ENCODE measurements at regions of chr1 and their contacts with region 1.

Region 1: DNA sequence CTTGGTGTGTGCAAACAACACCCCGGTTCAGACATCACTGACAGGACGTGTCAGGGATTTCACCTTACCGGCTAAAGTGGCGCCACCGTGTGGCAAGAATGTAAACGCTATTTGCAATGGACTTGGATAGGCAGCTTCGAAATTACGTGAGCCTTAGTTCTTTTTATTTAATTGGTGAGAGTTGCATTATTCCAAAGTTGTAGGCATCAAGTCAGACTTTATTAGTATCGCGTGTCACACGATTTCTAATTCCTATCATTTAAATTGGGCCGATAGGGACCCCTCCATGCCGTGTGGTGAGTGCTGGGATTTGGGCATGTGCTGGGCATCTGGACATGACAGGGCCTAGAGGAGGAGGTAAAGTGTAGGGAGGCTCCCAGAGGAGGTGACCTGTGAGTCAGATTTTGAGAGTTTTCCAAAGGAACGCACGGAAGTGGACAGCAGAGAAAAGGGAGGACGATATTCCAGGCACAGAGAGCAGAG is 14.5 kb upstream of the CPT2 start:
- DNase-seq: peak; percentile 76
- H3K4me3 ChIP-seq: no peak overlapping the region
- H3K27ac ChIP-seq: no peak overlapping the region
- H3K4me1 ChIP-seq: no peaks in the 10 kb centered on the region
- H3K27me3 ChIP-seq: peaks cover 0 to 3% of the 10 kb centered on the region in 2 experiments
- CTCF ChIP-seq: peak; percentile 75 to 89
- POLR2A ChIP-seq: no peak

Region 2: GRCh38 chr1:52080014-52080415 is 1102.1 kb before region 1 on chr1:
- CTCF ChIA-PET with region 1: no interaction called
- POLR2A ChIA-PET with region 1: no interaction called
- dilution Hi-C with region 1: no loop called
- intact Hi-C with region 1: no loop called
- DNase-seq: no peak
- H3K4me3 ChIP-seq: no peak overlapping the region
- H3K27ac ChIP-seq: no peak overlapping the region
- H3K4me1 ChIP-seq: no peaks in the 10 kb centered on the region
- H3K27me3 ChIP-seq: no peaks in the 10 kb centered on the region
- CTCF ChIP-seq: no peak
- POLR2A ChIP-seq: no peak

Region 3: DNA sequence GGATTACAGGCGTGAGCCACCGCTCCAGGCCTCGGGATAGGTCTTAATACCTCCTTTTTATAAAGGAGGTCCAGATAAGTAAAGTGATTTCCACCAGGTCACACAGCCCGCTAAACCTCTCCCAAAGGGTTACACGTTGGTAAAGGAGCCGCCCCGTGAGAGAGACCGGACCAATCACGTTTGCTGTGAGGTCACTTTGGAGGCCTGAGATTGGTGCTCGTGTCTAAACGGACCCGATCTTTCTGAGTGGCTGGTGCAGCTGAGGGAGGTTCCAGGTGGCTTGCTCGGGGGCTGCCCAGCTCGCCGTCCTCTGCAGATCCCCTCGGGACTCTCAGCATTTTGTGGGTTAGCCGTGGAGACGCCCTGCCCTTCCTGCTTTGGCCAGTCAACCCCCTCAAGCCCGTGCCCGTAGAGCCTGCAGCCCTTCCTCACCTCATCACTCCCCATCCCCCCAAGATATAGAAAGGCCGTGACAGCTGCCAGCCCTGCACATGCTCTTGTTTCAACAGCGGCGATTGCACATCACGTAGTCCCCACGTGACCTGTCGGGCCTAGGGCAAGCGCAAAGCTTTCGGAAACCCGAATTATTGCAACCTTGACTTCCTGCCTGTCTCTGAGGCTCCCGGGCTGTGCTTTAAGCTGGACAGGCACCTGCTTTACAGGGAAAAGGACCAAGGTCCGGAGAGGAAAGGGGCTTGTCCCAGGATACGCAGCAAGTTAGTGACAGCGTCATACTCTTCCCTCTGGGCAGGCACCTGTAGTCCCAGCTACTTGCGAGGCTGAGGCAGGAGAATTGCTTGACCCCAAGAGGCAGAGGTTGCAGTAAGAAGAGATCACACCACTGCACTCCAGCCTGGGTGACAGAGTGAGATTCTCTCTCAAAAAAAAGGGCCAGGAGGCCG is 479.0 kb before region 1 on chr1:
- CTCF ChIA-PET with region 1: interaction called, 3 read pairs
- POLR2A ChIA-PET with region 1: no interaction called
- dilution Hi-C with region 1: no loop called
- intact Hi-C with region 1: loop called (anchors 1 kb)
- DNase-seq: peak; percentile 89
- H3K4me3 ChIP-seq: peak overlapping the region; percentile 15 to 48 (median 32)
- H3K27ac ChIP-seq: peak overlapping the region; percentile 2
- H3K4me1 ChIP-seq: peaks cover 8% of the 10 kb centered on the region
- H3K27me3 ChIP-seq: peaks cover 0 to 9% of the 10 kb centered on the region in 2 experiments
- CTCF ChIP-seq: no peak
- POLR2A ChIP-seq: peak; percentile 54

Region 4: DNA sequence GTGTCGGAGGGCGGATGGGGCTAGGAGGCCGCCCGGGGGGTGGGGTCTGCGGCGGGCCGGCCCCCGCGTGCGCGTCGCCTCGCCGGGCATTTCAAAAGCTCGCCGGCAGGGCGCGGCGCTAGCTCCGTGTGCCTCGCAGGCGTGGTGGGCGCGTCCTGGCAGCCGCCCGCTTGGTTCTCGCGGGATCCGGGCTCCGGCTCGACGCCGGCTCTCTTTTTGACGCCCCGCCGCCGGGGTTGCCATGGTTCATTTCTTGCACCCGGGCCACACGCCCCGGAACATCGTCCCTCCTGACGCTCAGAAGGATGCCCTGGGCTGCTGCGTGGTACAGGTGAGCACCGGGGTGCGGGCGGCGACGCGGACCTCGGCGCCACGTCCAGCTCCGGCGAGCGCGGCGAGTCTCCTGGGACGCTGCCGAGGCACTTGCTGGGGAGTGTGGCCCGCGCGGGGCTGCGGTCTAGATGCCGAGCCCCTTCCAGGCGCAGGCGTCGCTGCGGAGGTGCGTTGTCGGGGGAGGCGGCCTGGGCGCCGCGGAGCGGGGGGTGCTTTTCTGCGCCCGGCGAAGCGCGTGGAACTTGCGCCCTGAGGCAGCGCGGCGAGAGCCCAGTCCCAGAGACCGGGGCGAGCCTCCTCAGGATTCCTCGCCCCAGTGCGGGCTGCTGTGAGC is 339.4 kb before region 1 on chr1 and contains the start of gene ZYG11A:
- CTCF ChIA-PET with region 1: interaction called, 20 read pairs
- POLR2A ChIA-PET with region 1: no interaction called
- dilution Hi-C with region 1: no loop called
- intact Hi-C with region 1: loop called (anchors 2 kb)
- DNase-seq: peak; percentile 81
- H3K4me3 ChIP-seq: peak within 1 kb of the TSS; percentile 28 to 76 (median 62)
- H3K27ac ChIP-seq: no peak within 1 kb of the TSS
- H3K4me1 ChIP-seq: no peaks in the 10 kb centered on the region
- H3K27me3 ChIP-seq: no peaks in the 10 kb centered on the region
- CTCF ChIP-seq: peak in 1 of 2 donors; percentile 44
- POLR2A ChIP-seq: no peak
- total RNA-seq, gene ZYG11A: 1.3 and 2.1 TPM in 2 replicates

Region 5: GRCh38 chr1:52904927-52905698 is 277.0 kb before region 1 on chr1:
- CTCF ChIA-PET with region 1: interaction called, 44 read pairs
- POLR2A ChIA-PET with region 1: no interaction called
- dilution Hi-C with region 1: no loop called
- intact Hi-C with region 1: loop called (anchors 1 kb)
- DNase-seq: no peak
- H3K4me3 ChIP-seq: no peak overlapping the region
- H3K27ac ChIP-seq: no peak overlapping the region
- H3K4me1 ChIP-seq: no peaks in the 10 kb centered on the region
- H3K27me3 ChIP-seq: no peaks in the 10 kb centered on the region
- CTCF ChIP-seq: peak; percentile 29 to 59
- POLR2A ChIP-seq: no peak

Region 6: DNA sequence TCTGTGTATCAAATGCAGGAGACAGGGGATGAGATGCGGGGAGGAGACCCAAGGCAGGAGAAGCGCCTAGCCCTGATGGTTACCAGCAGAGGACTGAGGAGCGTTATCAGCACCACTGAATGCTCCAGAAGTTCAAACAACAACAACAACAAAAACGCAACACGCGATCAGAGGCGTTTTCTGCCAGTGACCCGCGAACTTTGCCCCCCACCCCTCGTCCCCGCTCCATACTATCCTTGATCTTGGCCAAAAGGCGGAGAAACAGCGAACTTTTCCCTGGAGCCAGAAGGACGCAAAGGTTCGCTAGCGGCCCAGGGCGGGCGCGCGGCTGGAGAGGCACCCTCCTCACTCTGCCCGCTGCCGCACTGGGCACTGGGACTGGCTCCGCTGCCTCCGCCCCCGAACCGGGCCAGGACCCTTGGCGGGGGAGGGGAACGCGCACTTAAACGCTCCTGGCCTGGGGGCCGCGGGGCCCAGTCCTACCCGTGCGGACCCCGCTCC is 261.3 kb before region 1 on chr1:
- CTCF ChIA-PET with region 1: interaction called, 4 read pairs
- POLR2A ChIA-PET with region 1: no interaction called
- dilution Hi-C with region 1: no loop called
- intact Hi-C with region 1: loop called (anchors 5 kb)
- DNase-seq: peak; percentile 3
- H3K4me3 ChIP-seq: peak overlapping the region; percentile 20 to 56 (median 48)
- H3K27ac ChIP-seq: no peak overlapping the region
- H3K4me1 ChIP-seq: no peaks in the 10 kb centered on the region
- H3K27me3 ChIP-seq: no peaks in the 10 kb centered on the region
- CTCF ChIP-seq: no peak
- POLR2A ChIP-seq: no peak

Region 7: DNA sequence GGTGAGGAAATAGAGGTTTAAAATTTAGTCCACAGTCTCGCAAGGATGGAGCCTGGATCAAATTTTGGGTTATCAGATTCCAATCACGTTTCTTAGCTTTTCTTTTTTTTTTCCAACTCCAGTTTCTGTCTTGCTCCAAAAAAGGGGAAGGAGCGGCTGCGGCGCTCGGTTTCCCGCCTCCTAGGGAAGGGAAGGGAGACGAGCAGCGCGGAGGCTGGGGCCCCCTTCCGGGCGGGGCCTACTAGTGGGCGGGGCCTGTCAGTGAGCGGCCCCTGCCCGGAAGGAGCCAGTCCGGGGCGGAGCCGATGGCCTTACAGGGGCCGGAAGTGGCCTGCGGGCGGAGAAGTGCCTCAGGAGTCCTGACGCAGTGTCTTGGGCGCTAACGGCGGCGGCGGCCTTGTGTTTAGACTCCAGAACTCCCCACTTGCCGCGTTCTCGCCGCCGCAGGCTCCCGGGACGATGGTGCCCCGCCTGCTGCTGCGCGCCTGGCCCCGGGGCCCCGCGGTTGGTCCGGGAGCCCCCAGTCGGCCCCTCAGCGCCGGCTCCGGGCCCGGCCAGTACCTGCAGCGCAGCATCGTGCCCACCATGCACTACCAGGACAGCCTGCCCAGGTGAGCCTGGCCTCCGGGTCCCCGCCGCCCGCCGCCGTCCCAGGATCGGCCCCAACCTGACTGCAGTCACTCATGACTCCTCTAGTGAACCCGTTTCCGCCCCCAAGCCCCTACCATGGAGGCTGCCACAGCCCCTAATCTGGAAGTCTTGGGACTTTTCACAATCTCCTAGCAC is 14.5 kb after region 1 on chr1 and contains the start of gene CPT2:
- CTCF ChIA-PET with region 1: interaction called, 46 read pairs
- POLR2A ChIA-PET with region 1: no interaction called
- dilution Hi-C with region 1: no loop called
- intact Hi-C with region 1: no loop called
- DNase-seq: peak; percentile 79
- H3K4me3 ChIP-seq: peak within 1 kb of the TSS; percentile 63 to 92 (median 77)
- H3K27ac ChIP-seq: peak within 1 kb of the TSS; percentile 74
- H3K4me1 ChIP-seq: peaks cover 13% of the 10 kb centered on the region
- H3K27me3 ChIP-seq: no peaks in the 10 kb centered on the region
- CTCF ChIP-seq: peak in 1 of 2 donors; percentile 3
- POLR2A ChIP-seq: peak; percentile 93
- total RNA-seq, gene CPT2: 10.4 and 11.6 TPM in 2 replicates

Region 8: DNA sequence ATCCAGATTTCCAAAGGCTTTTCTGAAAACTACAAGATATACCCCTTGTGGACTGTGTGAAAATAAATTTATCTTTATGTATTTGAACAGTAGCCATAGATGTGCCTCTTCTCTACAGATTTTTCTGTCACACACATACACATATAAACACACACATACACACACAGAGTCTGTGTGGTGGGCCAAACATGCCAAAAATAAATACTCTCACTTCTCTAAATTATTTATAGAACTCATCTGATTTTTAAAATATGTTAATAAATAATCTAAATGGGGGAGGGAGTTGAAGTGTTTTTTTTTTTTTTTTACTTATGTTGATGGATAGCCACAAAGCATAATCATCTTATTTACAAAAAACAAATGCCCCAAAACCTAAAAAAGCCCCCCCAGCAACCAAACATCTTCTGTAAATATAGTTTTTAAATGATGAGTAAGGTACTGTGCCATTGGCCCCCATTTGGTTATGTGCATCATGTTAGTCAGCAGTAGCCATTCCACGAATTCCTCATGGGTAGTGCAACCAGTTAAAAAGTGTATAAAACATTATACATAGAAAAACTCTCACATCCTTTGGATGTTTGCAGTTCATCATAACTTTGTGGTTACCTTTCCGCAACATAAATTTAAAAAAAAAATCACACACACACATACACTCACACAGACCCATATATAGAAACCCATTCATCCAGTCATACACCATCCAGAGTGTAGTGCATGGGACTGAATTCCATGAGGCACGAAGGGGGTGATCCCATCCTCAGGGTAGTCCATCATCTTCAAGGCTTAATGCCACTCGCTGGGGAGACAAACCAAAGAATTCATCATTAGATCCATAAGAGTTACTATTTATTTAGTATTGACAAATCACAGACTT is 64.3 kb after region 1 on chr1:
- CTCF ChIA-PET with region 1: no interaction called
- POLR2A ChIA-PET with region 1: no interaction called
- dilution Hi-C with region 1: no loop called
- intact Hi-C with region 1: no loop called
- DNase-seq: no peak
- H3K4me3 ChIP-seq: no peak overlapping the region
- H3K27ac ChIP-seq: no peak overlapping the region
- H3K4me1 ChIP-seq: peaks cover 4% of the 10 kb centered on the region
- H3K27me3 ChIP-seq: no peaks in the 10 kb centered on the region
- CTCF ChIP-seq: no peak
- POLR2A ChIP-seq: no peak

Region 9: DNA sequence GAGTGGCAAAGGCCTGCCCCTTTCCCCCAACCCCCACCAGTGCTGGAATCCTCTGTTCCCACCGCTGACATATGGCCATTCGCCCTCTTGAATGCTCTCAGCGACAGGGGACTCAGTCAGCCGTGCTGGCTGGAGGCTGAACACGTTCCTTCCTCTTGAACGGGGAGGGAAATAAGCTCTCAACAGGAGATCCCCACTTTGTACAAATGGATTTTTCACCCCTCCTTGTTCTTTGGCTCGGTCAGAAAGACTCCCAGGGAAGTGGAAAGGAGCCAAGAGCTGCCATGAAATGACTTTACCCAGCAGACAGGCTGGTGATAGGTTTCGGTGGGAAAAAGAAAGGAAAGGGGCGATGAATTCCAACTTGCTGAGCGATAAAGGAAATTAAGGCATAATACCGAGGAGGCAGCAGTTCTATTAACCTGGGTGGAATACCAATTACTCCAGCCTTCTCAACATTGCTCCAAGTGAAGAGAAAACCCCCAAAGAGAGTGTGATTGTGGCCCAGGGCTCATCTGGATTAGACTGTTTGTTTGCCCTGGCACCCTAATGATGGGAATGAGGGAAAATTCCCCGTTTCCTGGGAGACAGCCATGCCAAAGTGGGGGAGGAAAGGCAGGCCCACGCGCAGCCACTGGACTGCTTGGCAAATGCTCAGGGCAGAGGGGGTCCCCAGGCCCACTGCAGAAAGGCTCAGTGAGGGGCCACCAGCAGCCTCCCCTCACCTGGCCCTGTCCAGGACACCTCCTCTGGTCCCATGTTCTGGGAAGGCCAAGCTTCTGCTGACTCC is 121.8 kb after region 1 on chr1:
- CTCF ChIA-PET with region 1: no interaction called
- POLR2A ChIA-PET with region 1: no interaction called
- dilution Hi-C with region 1: no loop called
- intact Hi-C with region 1: no loop called
- DNase-seq: no peak
- H3K4me3 ChIP-seq: no peak overlapping the region
- H3K27ac ChIP-seq: no peak overlapping the region
- H3K4me1 ChIP-seq: no peaks in the 10 kb centered on the region
- H3K27me3 ChIP-seq: no peaks in the 10 kb centered on the region
- CTCF ChIP-seq: no peak
- POLR2A ChIP-seq: no peak